GM10248 (cell line): ENCODE measurements at regions of chr17 and their contacts with region 1.

Region 1: DNA sequence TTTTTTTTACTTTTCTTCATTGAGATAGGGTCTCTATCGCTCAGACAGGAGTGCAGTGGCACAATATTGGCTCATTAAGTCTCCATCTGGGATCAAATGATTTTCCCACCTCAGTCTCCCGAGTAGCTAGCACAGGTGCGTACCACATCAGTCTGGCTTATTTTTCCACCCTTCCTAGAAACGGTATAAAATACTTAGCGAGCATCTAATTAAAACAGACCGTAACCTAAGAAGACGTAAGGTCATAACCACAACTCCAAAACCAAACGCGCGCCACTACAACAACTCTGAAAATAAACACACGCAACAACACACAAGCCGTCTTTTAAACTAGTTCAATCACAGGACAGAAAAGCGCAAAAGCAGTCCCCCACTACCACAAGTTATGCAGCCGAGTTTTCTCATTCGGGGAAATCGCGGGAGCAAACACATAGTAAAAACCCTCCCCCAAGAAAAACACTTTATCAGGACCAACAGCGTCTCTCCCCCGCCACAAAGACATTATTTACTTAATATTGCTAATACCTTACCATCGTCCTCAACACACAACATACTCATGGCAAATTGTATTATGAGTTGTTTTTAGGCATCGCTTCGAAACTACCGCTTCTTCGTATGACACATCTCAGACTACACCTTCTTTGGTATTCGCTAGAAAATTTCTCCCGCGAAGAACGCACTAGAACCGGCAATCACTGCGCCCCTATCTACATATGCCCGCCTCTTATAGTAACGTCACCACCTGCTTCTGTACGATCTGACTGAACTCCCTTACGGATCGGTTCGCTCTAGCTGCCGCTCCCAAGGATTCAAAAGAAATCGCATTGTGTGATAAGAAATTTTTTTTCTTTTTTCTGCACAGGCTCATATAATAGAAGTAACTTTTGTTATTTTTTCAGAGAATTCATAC is 32.8 kb downstream of the TEX14 start:
- DNase-seq: peak; percentile 85
- CTCF ChIP-seq: no peak

Region 2: GRCh38 chr17:58615768-58616659 is 43.0 kb before region 1 on chr17:
- CTCF ChIA-PET with region 1: no interaction called
- POLR2A ChIA-PET with region 1: interaction called, 15 read pairs
- DNase-seq: peak; percentile 73
- CTCF ChIP-seq: no peak

Region 3: GRCh38 chr17:59004338-59005111 is 345.5 kb after region 1 on chr17:
- CTCF ChIA-PET with region 1: no interaction called
- POLR2A ChIA-PET with region 1: interaction called, 11 read pairs
- DNase-seq: peak; percentile 57
- CTCF ChIP-seq: peak; percentile 88